Activated CD4-positive, alpha-beta memory T cell treated with anti-CD3 and anti-CD28 coated beads, Interleukin-2, amount 10 ng/mL, durations not matched to agents 7 days and 5 days (primary cell): ENCODE measurements at regions of chr6 and their contacts with region 1.

Region 1: GRCh38 chr6:109482905-109483735 is at the start of gene ZBTB24:
- DNase-seq: peak; percentile 91
- H3K4me3 Mint-ChIP-seq: peak within 1 kb of the TSS; percentile 98
- H3K27ac Mint-ChIP-seq: peak within 1 kb of the TSS; percentile 88
- H3K4me1 Mint-ChIP-seq: peaks cover 46% of the 10 kb centered on the region
- H3K27me3 Mint-ChIP-seq: peaks cover 2% of the 10 kb centered on the region
- total RNA-seq, gene ZBTB24: 16.5 to 17.5 TPM

Region 2: GRCh38 chr6:109411034-109411433 is 72.1 kb before region 1 on chr6:
- CTCF ChIA-PET with region 1: no interaction called
- POLR2A ChIA-PET with region 1: no interaction called
- DNase-seq: no peak
- H3K4me3 Mint-ChIP-seq: no peak overlapping the region
- H3K27ac Mint-ChIP-seq: no peak overlapping the region
- H3K4me1 Mint-ChIP-seq: no peaks in the 10 kb centered on the region
- H3K27me3 Mint-ChIP-seq: peaks cover 19% of the 10 kb centered on the region

Region 3: DNA sequence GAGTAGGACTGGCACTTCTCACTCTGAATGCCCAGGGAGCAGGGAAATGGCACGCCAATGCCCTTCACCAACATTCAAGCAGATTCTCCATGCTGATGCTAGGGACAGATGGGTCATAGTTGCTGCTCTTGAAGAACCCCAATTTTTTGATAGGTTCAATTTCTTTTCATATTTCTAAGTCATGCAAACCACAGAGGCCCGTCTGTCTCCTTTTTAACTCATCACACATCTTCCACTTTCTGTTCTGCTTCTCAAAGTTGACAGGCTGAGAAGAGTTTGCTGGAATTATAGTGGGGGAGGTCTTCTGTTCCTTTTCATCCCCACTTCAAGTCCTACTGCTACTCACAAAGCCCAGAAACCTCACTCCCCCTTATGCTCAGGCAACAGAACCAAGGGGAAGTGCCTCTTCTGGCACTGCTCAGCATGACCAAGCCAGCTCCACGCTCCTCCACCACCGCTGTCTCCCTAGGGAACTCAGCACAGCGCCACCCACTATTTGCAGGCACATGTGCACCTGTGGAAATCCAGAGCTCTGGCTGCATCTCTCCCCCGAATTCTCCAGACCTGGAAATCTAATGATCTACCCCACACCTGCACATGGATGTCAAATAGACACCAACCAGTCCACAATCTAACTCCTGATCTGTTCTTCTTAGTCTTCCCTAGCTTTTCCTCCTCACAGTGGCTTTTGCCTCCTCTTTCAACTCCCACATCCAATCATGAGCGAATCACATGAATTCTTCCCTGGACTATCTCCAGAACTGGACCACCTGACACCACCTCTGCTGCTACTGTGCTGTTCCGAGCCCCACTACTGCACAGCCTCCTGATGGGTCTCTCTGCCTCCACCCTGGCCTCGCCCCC is 10.8 kb before region 1 on chr6:
- CTCF ChIA-PET with region 1: interaction called, 3 read pairs
- POLR2A ChIA-PET with region 1: interaction called, 29 read pairs
- DNase-seq: no peak
- H3K4me3 Mint-ChIP-seq: no peak overlapping the region
- H3K27ac Mint-ChIP-seq: peak overlapping the region; percentile 41
- H3K4me1 Mint-ChIP-seq: peaks cover 67% of the 10 kb centered on the region
- H3K27me3 Mint-ChIP-seq: no peaks in the 10 kb centered on the region

Region 4: GRCh38 chr6:109595998-109596397 is 112.9 kb after region 1 on chr6:
- CTCF ChIA-PET with region 1: no interaction called
- POLR2A ChIA-PET with region 1: no interaction called
- DNase-seq: no peak
- H3K4me3 Mint-ChIP-seq: no peak overlapping the region
- H3K27ac Mint-ChIP-seq: no peak overlapping the region
- H3K4me1 Mint-ChIP-seq: no peaks in the 10 kb centered on the region
- H3K27me3 Mint-ChIP-seq: peaks cover 2% of the 10 kb centered on the region